ENCODE measurements at regions of chr1 and their contacts with region 1.

Region 1: DNA sequence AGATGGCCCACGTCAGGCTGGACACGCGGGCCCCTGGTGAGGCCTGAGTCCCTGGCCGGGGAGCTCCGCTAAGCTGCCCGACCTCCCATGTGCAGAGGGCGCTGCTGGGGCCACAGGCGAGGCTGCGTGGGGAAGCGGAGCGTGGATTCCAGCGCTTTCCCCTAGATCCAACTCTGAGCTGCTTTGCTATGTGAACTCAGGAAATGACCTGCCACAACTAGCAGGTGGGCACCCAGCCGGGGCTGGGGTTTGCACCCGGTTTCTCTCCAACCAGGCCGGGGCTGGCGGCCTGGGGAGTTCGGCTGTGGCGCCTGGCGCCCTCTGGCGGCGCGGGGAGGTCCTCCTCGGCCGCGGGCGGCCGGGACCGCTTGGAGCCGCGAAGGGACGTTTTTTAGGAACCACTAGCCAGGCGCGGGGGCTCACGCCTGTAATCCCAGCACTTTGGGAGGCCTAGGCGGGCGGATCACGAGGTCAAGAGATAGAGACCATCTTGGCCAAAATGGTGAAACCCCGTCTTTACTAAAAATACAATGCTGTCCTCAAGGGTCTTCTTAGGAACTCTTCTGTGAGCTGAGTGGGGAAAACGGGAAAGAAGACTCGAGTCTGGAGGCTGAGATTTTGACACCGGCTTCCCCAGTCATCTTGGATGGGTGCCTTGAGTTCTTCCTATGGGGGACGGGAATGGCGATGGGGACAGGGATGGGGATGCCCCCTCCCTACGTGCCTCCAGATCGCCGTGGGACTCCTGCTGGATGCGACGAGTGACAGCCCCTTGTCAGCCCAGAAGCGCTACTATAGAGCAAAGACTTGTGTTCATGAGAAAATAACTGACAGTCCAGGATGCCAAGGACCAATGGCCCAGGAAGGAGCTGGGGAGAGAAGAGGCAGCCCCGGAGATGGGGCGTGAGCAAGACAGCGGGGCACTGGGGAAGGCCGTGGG is 12.6 kb downstream of the PYCR2 start:
- DNase-seq: peak; percentile 86
- H3K4me3 Mint-ChIP-seq: no peak overlapping the region
- H3K27ac Mint-ChIP-seq: no peak overlapping the region
- H3K4me1 Mint-ChIP-seq: peaks cover 30% of the 10 kb centered on the region
- H3K27me3 Mint-ChIP-seq: no peaks in the 10 kb centered on the region
- CTCF ChIP-seq: peak; percentile 97

Region 2: DNA sequence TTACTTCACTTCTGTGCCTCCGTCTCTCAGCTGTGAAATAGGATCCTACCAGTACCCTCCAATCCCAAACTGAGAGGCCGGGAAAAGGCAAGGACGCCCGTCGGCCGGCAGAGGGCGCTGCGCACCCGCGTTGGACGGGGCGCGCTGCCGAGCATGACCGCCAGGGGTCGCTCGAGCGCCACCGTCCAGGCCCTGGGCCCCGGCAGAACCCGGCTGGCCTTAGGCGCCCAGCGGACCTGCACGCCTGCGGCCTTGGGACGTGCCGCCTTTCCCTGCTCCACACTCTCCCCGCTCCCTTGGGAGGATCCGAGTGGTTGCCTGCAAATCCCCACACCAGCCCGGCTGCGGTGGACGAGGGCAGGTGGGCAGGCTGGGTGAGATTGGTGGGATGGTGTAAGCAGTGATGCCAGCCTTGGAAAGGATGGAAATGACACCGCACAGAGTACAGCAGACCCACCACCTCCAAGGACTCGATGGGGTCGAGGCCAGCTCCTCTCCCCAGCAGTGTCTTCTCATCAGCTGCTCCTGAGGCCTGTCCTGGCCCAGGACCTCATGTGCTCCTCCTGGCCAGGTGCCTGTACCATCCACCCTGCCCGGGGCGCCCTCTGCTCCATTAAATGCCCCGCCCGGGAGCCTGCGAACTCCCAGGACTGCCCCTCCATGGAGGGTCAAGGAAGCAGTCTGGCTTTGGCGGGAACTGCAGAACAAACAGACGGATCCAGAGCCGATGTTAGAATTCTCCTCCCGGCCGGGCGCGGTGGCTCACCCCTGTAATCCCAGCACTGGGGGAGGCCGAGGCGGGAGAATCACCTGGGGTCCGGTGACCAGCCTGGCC is 436.3 kb before region 1 on chr1:
- CTCF ChIA-PET with region 1: interaction called, 3 read pairs
- intact Hi-C with region 1: loop called (anchors 5 kb)
- DNase-seq: peak; percentile 81
- H3K4me3 Mint-ChIP-seq: no peak overlapping the region
- H3K27ac Mint-ChIP-seq: no peak overlapping the region
- H3K4me1 Mint-ChIP-seq: peaks cover 10% of the 10 kb centered on the region
- H3K27me3 Mint-ChIP-seq: no peaks in the 10 kb centered on the region
- CTCF ChIP-seq: peak; percentile 100

Region 3: DNA sequence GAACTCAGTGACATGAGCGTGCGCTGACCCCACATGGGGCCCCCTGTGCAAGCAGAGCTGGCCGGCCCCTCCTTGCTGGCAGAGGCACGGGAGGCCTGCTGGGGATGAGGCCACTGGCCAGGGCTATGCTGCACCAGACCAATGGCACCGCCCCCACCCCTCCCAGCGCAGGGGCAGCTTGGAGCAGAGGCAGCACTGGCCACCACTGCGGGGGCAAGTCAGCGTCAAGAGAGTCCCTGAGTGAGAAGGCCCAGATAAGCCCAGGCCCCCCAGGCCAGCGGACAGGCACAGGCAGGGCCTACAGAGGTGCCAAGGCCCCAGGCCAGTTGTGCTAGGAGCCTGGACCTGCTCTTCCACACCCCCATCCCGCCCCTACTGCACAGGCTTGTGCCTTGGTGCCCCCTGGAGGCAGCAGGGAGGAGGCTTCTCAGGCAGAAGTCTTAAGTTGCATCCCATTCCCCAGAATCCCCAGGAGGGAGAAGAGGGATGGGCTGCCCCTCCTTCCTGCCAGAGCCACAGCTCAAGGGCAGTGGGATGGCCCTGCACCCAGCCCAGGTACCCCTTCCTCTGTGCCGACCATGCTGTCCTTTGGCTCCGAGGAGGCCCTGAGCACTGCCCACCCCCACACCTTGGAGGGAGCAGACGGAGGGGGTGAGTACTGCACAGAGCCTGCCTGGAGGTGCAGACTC is 65.7 kb before region 1 on chr1:
- CTCF ChIA-PET with region 1: no interaction called
- intact Hi-C with region 1: loop called (anchors 5 kb)
- DNase-seq: peak; percentile 83
- H3K4me3 Mint-ChIP-seq: no peak overlapping the region
- H3K27ac Mint-ChIP-seq: peak overlapping the region; percentile 60
- H3K4me1 Mint-ChIP-seq: no peaks in the 10 kb centered on the region
- H3K27me3 Mint-ChIP-seq: no peaks in the 10 kb centered on the region
- CTCF ChIP-seq: peak; percentile 63

Region 4: DNA sequence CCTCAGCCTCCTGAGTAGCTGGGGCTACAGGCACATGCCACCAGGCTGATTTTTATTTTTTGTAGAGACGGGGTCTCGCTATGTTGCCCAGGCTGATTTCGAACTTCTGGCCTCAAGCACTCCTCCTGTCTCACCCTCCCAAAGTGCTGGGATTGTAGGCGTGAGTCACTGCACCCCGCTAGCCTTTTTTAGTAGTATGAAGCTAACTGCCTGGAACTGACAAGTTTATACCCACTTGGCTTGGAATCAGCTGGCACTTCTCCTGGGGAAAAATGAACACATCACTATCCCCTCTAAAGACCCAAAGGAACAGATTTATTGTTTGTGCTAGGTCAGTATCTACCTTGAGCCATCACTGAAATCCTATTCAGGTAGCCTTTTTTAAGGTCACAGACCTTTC is 48.3 kb before region 1 on chr1:
- CTCF ChIA-PET with region 1: interaction called, 3 read pairs
- intact Hi-C with region 1: loop called (anchors 5 kb)
- DNase-seq: no peak
- H3K4me3 Mint-ChIP-seq: no peak overlapping the region
- H3K27ac Mint-ChIP-seq: no peak overlapping the region
- H3K4me1 Mint-ChIP-seq: no peaks in the 10 kb centered on the region
- H3K27me3 Mint-ChIP-seq: no peaks in the 10 kb centered on the region
- CTCF ChIP-seq: no peak

Region 5: GRCh38 chr1:225881969-225882693 is 29.3 kb before region 1 on chr1 and contains the start of gene TMEM63A:
- CTCF ChIA-PET with region 1: interaction called, 11 read pairs
- intact Hi-C with region 1: loop called (anchors 1 kb)
- DNase-seq: peak; percentile 96
- H3K4me3 Mint-ChIP-seq: peak within 1 kb of the TSS; percentile 67
- H3K27ac Mint-ChIP-seq: peak within 1 kb of the TSS; percentile 85
- H3K4me1 Mint-ChIP-seq: peaks cover 62% of the 10 kb centered on the region
- H3K27me3 Mint-ChIP-seq: no peaks in the 10 kb centered on the region
- CTCF ChIP-seq: peak; percentile 11
- total RNA-seq, gene TMEM63A: 253 and 303 TPM in 2 replicates

Region 6: DNA sequence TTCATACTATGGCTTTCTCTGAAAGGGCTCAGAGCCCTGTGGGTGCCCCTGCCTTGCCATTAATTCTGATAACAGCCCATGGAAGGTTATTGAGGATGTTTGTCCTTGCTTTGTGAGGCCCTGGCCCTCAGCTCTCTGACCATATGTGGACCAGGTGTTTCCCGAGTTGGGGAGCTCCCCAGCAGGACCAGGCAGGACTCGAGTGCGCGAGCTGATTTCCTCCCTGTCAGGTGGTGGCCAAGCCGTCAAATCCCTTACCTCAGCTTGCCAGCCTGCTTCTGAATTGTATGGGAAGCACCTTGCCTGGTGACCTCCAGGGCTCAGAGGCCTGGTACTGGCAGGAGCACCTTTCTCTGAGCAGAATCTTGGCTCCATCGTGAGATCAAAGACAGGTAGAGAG is 105.6 kb after region 1 on chr1:
- CTCF ChIA-PET with region 1: no interaction called
- intact Hi-C with region 1: no loop called
- DNase-seq: no peak
- H3K4me3 Mint-ChIP-seq: no peak overlapping the region
- H3K27ac Mint-ChIP-seq: no peak overlapping the region
- H3K4me1 Mint-ChIP-seq: no peaks in the 10 kb centered on the region
- H3K27me3 Mint-ChIP-seq: peaks cover 23% of the 10 kb centered on the region
- CTCF ChIP-seq: no peak

Region 7: DNA sequence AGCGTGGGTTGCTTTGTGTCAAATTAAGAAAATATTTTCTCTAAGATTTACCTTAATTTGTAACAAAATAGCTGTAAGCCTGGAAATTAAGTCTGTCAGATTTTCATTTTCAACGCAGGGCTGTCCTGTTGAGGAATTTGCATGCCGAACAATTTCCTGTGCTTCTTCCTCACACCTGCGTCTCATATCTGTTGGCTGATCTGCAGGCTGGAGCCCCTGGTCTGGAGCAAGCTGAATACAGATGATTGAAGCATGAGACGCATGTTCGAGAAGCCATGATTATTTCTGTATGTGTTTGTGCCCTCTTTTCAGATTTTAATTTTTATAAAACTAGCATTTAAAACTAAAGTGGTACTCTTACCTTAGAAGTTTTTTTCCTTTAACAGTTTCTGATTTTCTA is 321.8 kb after region 1 on chr1:
- CTCF ChIA-PET with region 1: no interaction called
- intact Hi-C with region 1: no loop called
- DNase-seq: no peak
- H3K4me3 Mint-ChIP-seq: no peak overlapping the region
- H3K27ac Mint-ChIP-seq: no peak overlapping the region
- H3K4me1 Mint-ChIP-seq: no peaks in the 10 kb centered on the region
- H3K27me3 Mint-ChIP-seq: no peaks in the 10 kb centered on the region
- CTCF ChIP-seq: no peak